ENCODE measurements at regions of chr19 and their contacts with region 1.

Region 1: GRCh38 chr19:8321060-8321985 is at the starts of genes NDUFA7 and RPS28:
- DNase-seq: peak; percentile 86
- ATAC-seq: peak; percentile 79
- H3K4me3 ChIP-seq: peak within 1 kb of the TSS; percentile 91 to 100
- H3K27ac ChIP-seq: peak within 1 kb of the TSS; percentile 74
- H3K4me1 ChIP-seq: peaks cover 12 to 25% of the 10 kb centered on the region in 2 experiments; a peak in 3 of 4 replicates
- H3K27me3 ChIP-seq: no peaks in the 10 kb centered on the region
- CTCF ChIP-seq: no peak
- POLR2A ChIP-seq: peak; percentile 73
- RAD21 ChIP-seq: peak; percentile 46
- total RNA-seq, gene NDUFA7: 86.9 TPM
- total RNA-seq, gene RPS28: 2,379 TPM

Region 2: DNA sequence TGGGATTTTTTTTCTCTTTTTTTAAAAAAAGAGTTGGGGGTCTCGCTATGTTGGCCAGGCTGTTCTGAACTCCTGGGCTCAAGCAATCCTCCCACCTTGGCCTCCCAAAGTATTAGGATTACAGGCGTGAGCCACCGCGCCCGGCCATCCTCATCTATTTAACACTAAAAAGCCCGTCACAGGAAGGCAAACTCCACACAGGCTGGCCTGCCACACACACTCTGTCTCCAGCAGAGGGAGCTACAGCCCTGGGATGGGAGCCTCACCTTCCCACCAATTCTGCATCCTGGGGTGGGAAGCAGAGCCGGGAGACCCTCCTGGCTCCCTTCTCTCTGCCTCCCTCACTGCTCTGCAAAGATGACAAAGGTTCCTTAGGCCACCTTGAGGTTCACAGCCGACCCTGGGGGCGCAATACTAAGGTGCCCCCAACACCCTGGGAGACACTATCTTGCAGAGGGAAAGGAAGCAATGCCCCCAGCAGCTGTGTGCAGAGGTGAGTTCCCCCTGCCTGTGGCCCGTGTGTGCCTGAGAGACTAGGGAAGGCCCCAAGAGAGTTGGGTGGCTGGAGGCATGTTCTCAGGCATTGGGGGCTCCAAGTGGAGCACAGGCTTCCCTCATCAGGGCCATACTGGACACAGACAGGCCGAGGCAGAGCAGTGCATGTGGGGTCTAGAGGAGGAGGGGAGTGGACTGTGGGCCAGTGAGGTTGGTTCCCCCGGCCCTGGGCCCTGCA is 350.4 kb before region 1 on chr19:
- CTCF ChIA-PET with region 1: no interaction called
- POLR2A ChIA-PET with region 1: no interaction called
- RAD21 ChIA-PET with region 1: no interaction called
- intact Hi-C with region 1: no loop called
- DNase-seq: peak; percentile 8
- ATAC-seq: peak; percentile 87
- H3K4me3 ChIP-seq: no peak overlapping the region
- H3K27ac ChIP-seq: no peak overlapping the region
- H3K4me1 ChIP-seq: no peaks in the 10 kb centered on the region
- H3K27me3 ChIP-seq: no peaks in the 10 kb centered on the region
- CTCF ChIP-seq: peak; percentile 57 to 92 (median 81); a peak in 5 of 6 replicates
- POLR2A ChIP-seq: no peak
- RAD21 ChIP-seq: peak; percentile 75

Region 3: GRCh38 chr19:8036434-8037099 is 284.8 kb before region 1 on chr19:
- CTCF ChIA-PET with region 1: no interaction called
- POLR2A ChIA-PET with region 1: no interaction called
- RAD21 ChIA-PET with region 1: no interaction called
- intact Hi-C with region 1: no loop called
- DNase-seq: no peak
- ATAC-seq: no peak
- H3K4me3 ChIP-seq: no peak overlapping the region
- H3K27ac ChIP-seq: no peak overlapping the region
- H3K4me1 ChIP-seq: peaks cover 4 to 9% of the 10 kb centered on the region in 2 experiments; a peak in 3 of 4 replicates
- H3K27me3 ChIP-seq: no peaks in the 10 kb centered on the region
- CTCF ChIP-seq: no peak
- POLR2A ChIP-seq: no peak
- RAD21 ChIP-seq: no peak

Region 4: GRCh38 chr19:8161135-8161646 is 160.1 kb before region 1 on chr19:
- CTCF ChIA-PET with region 1: no interaction called
- POLR2A ChIA-PET with region 1: no interaction called
- RAD21 ChIA-PET with region 1: no interaction called
- intact Hi-C with region 1: no loop called
- DNase-seq: peak; percentile 48
- ATAC-seq: peak; percentile 87
- H3K4me3 ChIP-seq: no peak overlapping the region
- H3K27ac ChIP-seq: peak overlapping the region; percentile 60
- H3K4me1 ChIP-seq: peaks cover 10 to 11% of the 10 kb centered on the region in 2 experiments
- H3K27me3 ChIP-seq: no peaks in the 10 kb centered on the region
- CTCF ChIP-seq: no peak
- POLR2A ChIP-seq: peak; percentile 90
- RAD21 ChIP-seq: no peak

Region 5: GRCh38 chr19:8334458-8335342 is 13.4 kb after region 1 on chr19:
- CTCF ChIA-PET with region 1: interaction called, 7 read pairs
- POLR2A ChIA-PET with region 1: interaction called, 37 read pairs
- RAD21 ChIA-PET with region 1: interaction called in 1 of 2 experiments, 3 read pairs
- intact Hi-C with region 1: no loop called
- DNase-seq: peak; percentile 82
- ATAC-seq: peak; percentile 83
- H3K4me3 ChIP-seq: peak overlapping the region; percentile 71 to 82
- H3K27ac ChIP-seq: peak overlapping the region; percentile 100
- H3K4me1 ChIP-seq: peaks cover 18 to 31% of the 10 kb centered on the region in 2 experiments
- H3K27me3 ChIP-seq: no peaks in the 10 kb centered on the region
- CTCF ChIP-seq: no peak
- POLR2A ChIP-seq: peak; percentile 56
- RAD21 ChIP-seq: no peak

Region 6: GRCh38 chr19:8473648-8474476 is 152.5 kb after region 1 on chr19:
- CTCF ChIA-PET with region 1: no interaction called
- POLR2A ChIA-PET with region 1: no interaction called
- RAD21 ChIA-PET with region 1: no interaction called
- intact Hi-C with region 1: no loop called
- DNase-seq: no peak
- ATAC-seq: no peak
- H3K4me3 ChIP-seq: no peak overlapping the region
- H3K27ac ChIP-seq: no peak overlapping the region
- H3K4me1 ChIP-seq: no peaks in the 10 kb centered on the region
- H3K27me3 ChIP-seq: no peaks in the 10 kb centered on the region
- CTCF ChIP-seq: no peak
- POLR2A ChIP-seq: no peak
- RAD21 ChIP-seq: no peak